ENCODE measurements at regions of chr16 and their contacts with region 1.

Region 1: DNA sequence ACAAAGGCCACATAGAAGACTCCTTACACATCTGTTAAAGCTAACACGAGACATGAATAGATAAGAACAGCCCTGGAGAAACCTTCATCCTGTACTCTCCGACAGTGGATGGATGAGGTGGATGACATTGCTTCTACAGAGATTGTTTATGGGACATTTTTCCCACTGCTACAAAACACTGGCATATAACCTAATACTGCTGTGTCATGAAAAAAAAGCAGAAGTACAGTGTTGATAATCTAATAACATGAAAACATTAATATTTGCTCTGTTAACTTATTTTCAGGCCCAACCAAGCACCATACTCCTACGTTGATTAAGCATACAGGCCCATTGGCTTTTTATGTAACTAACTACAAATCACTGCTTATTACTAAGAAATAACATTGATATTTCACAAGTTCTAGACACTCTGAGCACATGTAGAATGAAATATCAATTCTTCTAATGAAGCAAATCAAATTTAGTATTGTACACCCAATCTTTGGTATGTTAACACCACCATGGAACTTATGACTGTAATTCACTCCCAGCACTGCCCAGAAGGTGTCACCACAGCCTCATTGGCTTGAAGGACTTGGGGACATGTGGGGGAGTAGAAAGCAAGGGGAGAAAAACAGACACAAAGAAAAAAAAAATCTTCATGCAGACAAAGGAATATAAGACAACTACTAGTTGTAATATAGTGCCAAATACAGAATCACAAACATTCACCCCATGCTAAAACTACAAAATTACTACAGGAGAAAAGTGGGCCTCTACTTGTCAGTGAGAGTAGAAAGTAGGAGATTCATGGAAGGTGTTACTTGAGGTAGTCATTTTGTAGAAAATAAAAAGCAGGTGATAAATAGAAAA is 330.0 kb upstream of the PMFBP1 start:
- DNase-seq: peak; percentile 73
- ATAC-seq: peak; percentile 96
- H3K4me3 ChIP-seq: no peak overlapping the region
- H3K27ac ChIP-seq: no peak overlapping the region
- H3K4me1 ChIP-seq: no peaks in the 10 kb centered on the region
- H3K27me3 ChIP-seq: no peaks in the 10 kb centered on the region
- CTCF ChIP-seq: peak; percentile 93
- EP300 ChIP-seq: no peak
- POLR2A ChIP-seq: no peak
- RAD21 ChIP-seq: peak; percentile 84

Region 2: DNA sequence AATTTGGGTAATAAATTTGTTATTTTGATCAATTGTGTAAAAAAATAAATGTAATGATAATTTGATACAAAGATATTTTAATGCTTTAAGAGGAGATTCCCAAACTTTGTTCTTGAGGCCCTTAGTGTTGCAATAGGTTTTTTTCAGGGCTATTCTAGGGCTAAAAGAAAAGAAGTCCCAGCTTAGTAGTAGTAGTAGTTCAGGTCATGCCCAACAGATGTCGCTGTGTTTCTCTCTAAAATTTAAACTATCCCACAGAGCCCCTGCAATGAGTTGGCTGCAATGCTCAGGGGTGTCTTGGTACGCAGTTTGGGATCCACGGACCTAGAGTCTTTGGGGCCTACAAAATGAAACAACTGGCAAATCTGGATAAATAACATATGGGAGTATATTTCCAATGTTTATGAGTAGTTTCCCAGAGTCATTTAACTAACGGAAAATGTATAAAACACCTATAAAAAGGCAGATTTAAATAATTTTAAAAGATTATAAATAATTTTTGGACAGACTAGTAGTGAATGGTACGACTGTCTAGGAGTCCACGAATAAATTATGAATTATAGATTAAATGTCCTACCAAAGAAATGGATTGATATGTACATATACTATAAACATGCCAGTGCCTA is 101.6 kb before region 1 on chr16:
- CTCF ChIA-PET with region 1: no interaction called
- POLR2A ChIA-PET with region 1: no interaction called
- in situ Hi-C with region 1: no loop called
- intact Hi-C with region 1: loop called (anchors 1 kb)
- DNase-seq: peak; percentile 71
- ATAC-seq: peak; percentile 82
- H3K4me3 ChIP-seq: no peak overlapping the region
- H3K27ac ChIP-seq: no peak overlapping the region
- H3K4me1 ChIP-seq: no peaks in the 10 kb centered on the region
- H3K27me3 ChIP-seq: no peaks in the 10 kb centered on the region
- CTCF ChIP-seq: peak; percentile 83
- EP300 ChIP-seq: no peak
- POLR2A ChIP-seq: no peak
- RAD21 ChIP-seq: peak; percentile 73

Region 3: DNA sequence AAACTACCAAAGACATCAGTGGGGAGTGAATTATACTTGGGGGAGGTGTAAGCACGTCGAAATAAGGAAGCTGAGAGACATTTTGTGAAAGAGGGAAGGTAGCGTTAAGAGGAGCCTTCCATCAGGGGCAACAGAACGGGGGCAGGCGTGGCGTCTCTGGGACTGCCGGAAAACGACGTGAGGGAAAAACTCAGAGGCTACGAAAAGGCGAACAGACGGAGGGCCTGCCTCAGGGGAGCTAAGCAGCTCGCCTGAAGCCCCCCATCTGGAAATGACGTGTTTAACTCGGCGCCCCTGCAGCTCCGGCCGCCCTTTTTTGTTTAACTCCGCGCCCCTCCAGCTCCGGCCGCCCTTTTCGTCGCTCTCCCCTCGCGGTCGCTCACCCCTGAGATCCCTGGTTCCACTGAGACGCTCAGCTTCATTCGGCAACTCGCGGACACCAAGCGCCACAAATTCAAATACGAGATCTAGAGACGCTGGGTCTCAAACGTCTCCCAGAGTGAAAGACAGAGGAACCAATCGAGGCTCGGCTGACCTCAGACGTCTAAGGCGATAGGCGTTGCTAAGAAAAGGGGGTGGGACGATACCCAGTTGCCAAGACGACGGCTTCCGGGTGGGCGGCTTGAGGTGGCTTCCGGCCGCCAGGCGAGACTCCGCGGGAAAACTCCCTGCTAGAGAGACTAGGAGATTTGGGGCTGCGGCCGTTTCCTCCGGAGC is 162.7 kb after region 1 on chr16:
- CTCF ChIA-PET with region 1: no interaction called
- POLR2A ChIA-PET with region 1: no interaction called
- in situ Hi-C with region 1: no loop called
- intact Hi-C with region 1: loop called (anchors 5 kb)
- DNase-seq: peak; percentile 99
- ATAC-seq: peak; percentile 100
- H3K4me3 ChIP-seq: peak overlapping the region; percentile 77 to 93 (median 88)
- H3K27ac ChIP-seq: peak overlapping the region; percentile 75
- H3K4me1 ChIP-seq: peaks cover 23% of the 10 kb centered on the region
- H3K27me3 ChIP-seq: no peaks in the 10 kb centered on the region; a peak in 1 of 5 replicates
- CTCF ChIP-seq: no peak; the same call in 1 of the 2 replicates
- EP300 ChIP-seq: no peak
- POLR2A ChIP-seq: peak; percentile 57 to 91
- RAD21 ChIP-seq: no peak

Region 4: DNA sequence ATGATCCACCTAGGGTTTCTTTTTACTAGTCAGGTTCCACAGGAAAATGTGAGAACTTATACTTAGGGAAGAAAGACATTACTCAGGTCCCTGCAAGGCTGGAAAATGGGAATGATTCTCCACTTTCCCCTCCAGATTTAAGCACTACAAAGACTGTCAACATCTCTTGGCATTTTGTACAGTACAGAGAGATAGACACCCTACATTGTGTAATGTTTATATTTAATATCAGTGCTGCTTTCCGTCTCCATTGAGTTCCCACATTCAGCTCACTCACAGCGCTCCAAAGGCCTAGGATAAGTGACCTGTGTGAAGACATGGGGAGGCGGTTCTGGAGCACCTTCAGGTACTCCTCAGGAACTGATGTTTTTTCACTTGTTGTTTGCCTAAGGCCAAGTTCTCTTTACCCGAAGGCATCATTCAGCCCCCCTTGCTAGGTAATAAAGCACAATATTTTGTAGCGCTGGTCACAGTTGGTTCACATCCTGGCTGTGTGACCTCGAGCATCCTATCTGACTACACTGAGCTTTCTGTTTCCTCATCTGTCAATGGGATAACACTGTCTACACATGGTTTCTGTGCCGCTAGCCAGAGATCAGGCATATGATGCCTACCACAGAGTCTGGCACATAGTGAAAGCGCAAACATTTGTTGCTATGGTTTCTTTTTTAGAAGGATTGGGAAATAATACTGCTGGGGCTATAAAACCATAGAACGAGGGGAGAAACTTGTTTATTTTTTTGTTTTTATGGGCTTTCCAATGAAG is 319.4 kb after region 1 on chr16:
- CTCF ChIA-PET with region 1: no interaction called
- POLR2A ChIA-PET with region 1: no interaction called
- in situ Hi-C with region 1: loop called (anchors 25 kb)
- intact Hi-C with region 1: loop called (anchors 5 kb)
- DNase-seq: no peak
- ATAC-seq: no peak
- H3K4me3 ChIP-seq: no peak overlapping the region
- H3K27ac ChIP-seq: no peak overlapping the region
- H3K4me1 ChIP-seq: no peaks in the 10 kb centered on the region
- H3K27me3 ChIP-seq: no peaks in the 10 kb centered on the region
- CTCF ChIP-seq: no peak
- EP300 ChIP-seq: no peak
- POLR2A ChIP-seq: no peak
- RAD21 ChIP-seq: no peak

Region 5: GRCh38 chr16:72832621-72833248 is 330.8 kb after region 1 on chr16:
- CTCF ChIA-PET with region 1: no interaction called
- POLR2A ChIA-PET with region 1: no interaction called
- in situ Hi-C with region 1: loop called (anchors 25 kb)
- intact Hi-C with region 1: no loop called
- DNase-seq: peak; percentile 55
- ATAC-seq: peak; percentile 93
- H3K4me3 ChIP-seq: no peak overlapping the region
- H3K27ac ChIP-seq: no peak overlapping the region
- H3K4me1 ChIP-seq: no peaks in the 10 kb centered on the region
- H3K27me3 ChIP-seq: no peaks in the 10 kb centered on the region
- CTCF ChIP-seq: peak; percentile 95
- EP300 ChIP-seq: no peak
- POLR2A ChIP-seq: no peak
- RAD21 ChIP-seq: peak; percentile 93

Region 6: GRCh38 chr16:72847187-72848027 is 345.4 kb after region 1 on chr16:
- CTCF ChIA-PET with region 1: interaction called, 3 read pairs
- POLR2A ChIA-PET with region 1: no interaction called
- in situ Hi-C with region 1: loop called (anchors 25 kb)
- intact Hi-C with region 1: loop called (anchors 1 kb)
- DNase-seq: peak; percentile 30
- ATAC-seq: peak; percentile 87
- H3K4me3 ChIP-seq: no peak overlapping the region
- H3K27ac ChIP-seq: no peak overlapping the region
- H3K4me1 ChIP-seq: no peaks in the 10 kb centered on the region
- H3K27me3 ChIP-seq: no peaks in the 10 kb centered on the region
- CTCF ChIP-seq: peak; percentile 81
- EP300 ChIP-seq: no peak
- POLR2A ChIP-seq: no peak
- RAD21 ChIP-seq: 0 out of 2 replicates have a peak, but pooled peaks have one; percentile 33

Region 7: DNA sequence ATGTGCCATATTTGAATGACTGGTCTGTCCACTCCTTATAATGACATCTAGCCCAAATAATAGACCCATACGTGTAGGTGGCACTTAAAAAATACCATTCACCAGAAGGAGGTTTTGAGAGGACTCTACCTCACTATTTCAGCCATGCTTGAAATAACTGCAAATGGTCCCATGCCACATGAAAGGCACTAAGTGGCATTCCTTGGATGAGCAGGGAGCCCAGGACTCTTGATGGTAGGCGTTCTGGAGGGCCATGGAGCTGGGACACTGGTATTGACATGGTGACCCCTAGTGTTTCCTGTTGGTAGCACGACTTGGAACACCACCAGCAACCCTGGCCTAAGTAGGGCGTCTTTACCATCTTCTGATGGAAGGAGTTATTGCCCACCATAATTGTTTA is 694.7 kb after region 1 on chr16:
- CTCF ChIA-PET with region 1: interaction called, 11 read pairs
- POLR2A ChIA-PET with region 1: no interaction called
- in situ Hi-C with region 1: loop called (anchors 25 kb)
- intact Hi-C with region 1: loop called (anchors 1 kb)
- DNase-seq: peak; percentile 70
- ATAC-seq: peak; percentile 99
- H3K4me3 ChIP-seq: no peak overlapping the region
- H3K27ac ChIP-seq: no peak overlapping the region
- H3K4me1 ChIP-seq: peaks cover 5% of the 10 kb centered on the region
- H3K27me3 ChIP-seq: peaks cover 0 to 16% of the 10 kb centered on the region in 2 experiments; a peak in 1 of 5 replicates
- CTCF ChIP-seq: peak; percentile 95
- EP300 ChIP-seq: no peak
- POLR2A ChIP-seq: no peak
- RAD21 ChIP-seq: peak; percentile 85

Measured in HepG2 (cell line).